Caco-2 (cell line): ENCODE measurements at regions of chr12 and their contacts with region 1.

Region 1: DNA sequence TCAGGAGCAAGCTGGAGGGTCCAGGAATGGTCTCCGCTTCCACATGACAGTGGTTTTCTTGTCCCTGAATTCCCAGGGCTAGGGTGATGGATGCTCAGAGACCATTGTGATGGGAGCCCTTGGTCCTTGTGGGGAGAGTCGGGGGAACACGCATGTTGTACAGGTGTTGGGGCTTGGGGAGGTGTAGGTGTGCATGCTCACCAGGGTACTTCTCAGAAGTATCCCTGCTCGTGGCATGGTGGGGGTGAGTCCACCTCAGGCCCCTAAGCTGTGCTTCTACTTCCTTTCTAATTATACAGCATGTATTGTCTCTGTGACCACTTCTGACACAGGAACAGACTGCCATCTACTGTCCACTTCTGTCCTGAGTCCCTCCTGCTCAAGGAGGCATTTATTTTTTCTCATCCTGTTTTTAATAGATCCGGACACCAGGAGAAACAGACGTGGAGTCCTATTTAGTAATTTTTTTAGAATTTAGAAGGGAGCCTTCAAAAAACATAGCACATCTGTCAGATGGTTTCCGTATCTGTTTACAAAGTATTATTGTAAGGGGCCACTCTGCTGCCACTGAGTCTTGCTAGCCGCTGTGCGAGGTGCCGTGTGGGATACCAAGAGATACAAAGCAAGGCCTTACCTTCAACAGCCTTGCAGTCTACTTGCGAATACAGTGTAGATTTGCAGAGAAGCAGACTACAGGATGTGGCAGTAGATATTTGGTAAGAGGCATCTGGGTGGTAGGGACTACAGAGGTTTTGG is 10.5 kb downstream of the NTF3 start:
- DNase-seq: peak; percentile 65 to 76
- H3K4me3 ChIP-seq: no peak overlapping the region
- H3K4me3 Mint-ChIP-seq: no peak overlapping the region
- H3K27ac Mint-ChIP-seq: no peak overlapping the region
- H3K4me1 ChIP-seq: no peaks in the 10 kb centered on the region
- H3K4me1 Mint-ChIP-seq: peaks cover 7% of the 10 kb centered on the region
- H3K27me3 ChIP-seq: no peaks in the 10 kb centered on the region
- H3K27me3 Mint-ChIP-seq: no peaks in the 10 kb centered on the region
- CTCF ChIP-seq: peak; percentile 82 to 90

Region 2: DNA sequence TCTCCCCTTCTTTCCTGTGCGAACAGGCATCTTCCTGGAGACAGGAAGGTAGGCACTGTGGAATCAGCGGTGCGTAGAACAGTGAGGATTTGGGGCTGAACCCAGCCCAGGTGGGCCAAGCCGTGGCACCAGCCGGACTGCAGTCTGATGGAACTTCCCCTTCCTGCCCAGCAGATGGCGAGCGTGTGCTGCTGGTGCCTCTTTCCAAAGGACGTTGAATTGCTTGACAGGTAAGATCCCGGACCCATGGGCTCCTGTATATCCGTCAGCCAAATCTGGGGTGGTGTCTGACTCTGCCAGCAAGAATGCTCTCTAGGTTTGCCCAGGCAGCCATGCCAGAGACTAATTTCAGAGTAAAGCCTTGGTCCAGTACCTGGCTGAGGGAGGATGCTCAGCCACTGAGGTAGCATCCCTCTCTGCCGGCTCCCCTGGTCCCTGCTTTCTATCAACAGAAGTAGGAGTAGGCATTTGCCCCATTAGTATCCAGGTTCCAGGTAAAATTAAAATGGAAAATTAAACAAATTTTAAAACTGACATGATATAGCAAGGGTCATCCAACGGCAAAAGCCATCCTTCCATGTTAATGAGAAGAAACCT is 419.9 kb before region 1 on chr12:
- CTCF ChIA-PET with region 1: no interaction called
- POLR2A ChIA-PET with region 1: no interaction called
- intact Hi-C with region 1: loop called (anchors 1 kb)
- DNase-seq: peak in 1 of 2 experiments; percentile 65
- H3K4me3 ChIP-seq: no peak overlapping the region
- H3K4me3 Mint-ChIP-seq: no peak overlapping the region
- H3K27ac Mint-ChIP-seq: no peak overlapping the region
- H3K4me1 ChIP-seq: no peaks in the 10 kb centered on the region
- H3K4me1 Mint-ChIP-seq: no peaks in the 10 kb centered on the region
- H3K27me3 ChIP-seq: peaks cover 3% of the 10 kb centered on the region; the same call in 1 of the 2 replicates
- H3K27me3 Mint-ChIP-seq: peaks cover 28% of the 10 kb centered on the region
- CTCF ChIP-seq: peak; percentile 98 to 99

Region 3: GRCh38 chr12:5083955-5084849 is 358.2 kb before region 1 on chr12:
- CTCF ChIA-PET with region 1: no interaction called
- POLR2A ChIA-PET with region 1: no interaction called
- intact Hi-C with region 1: loop called (anchors 5 kb)
- DNase-seq: peak in 1 of 2 experiments; percentile 73
- H3K4me3 ChIP-seq: no peak overlapping the region
- H3K4me3 Mint-ChIP-seq: no peak overlapping the region
- H3K27ac Mint-ChIP-seq: no peak overlapping the region
- H3K4me1 ChIP-seq: no peaks in the 10 kb centered on the region
- H3K4me1 Mint-ChIP-seq: no peaks in the 10 kb centered on the region
- H3K27me3 ChIP-seq: peaks cover 3% of the 10 kb centered on the region; the same call in 1 of the 2 replicates
- H3K27me3 Mint-ChIP-seq: peaks cover 31% of the 10 kb centered on the region
- CTCF ChIP-seq: peak; percentile 78 to 82

Region 4: DNA sequence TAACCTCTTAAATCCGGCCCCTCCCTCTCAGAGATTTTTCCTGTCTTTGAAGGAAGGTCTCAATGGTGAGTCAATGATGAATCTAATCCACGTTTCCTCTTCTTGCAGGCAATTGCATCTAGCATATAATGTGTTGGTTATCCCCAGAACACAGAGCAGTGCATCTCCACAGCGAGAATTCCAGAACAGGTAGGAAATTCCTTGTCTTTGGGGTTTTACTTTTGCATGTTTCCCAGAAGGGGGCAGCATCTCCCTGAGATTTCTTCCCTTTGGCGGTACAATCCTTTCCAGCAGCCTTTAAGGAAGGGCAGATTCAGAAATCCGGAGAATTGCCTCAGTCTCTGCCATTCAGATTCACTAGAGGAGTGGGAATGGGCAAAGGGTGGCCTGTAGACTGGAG is 270.7 kb before region 1 on chr12:
- CTCF ChIA-PET with region 1: interaction called, 11 read pairs
- POLR2A ChIA-PET with region 1: no interaction called
- intact Hi-C with region 1: loop called (anchors 1 kb)
- DNase-seq: peak; percentile 62 to 81
- H3K4me3 ChIP-seq: no peak overlapping the region
- H3K4me3 Mint-ChIP-seq: no peak overlapping the region
- H3K27ac Mint-ChIP-seq: no peak overlapping the region
- H3K4me1 ChIP-seq: no peaks in the 10 kb centered on the region
- H3K4me1 Mint-ChIP-seq: no peaks in the 10 kb centered on the region
- H3K27me3 ChIP-seq: no peaks in the 10 kb centered on the region; the same call in 1 of the 2 replicates
- H3K27me3 Mint-ChIP-seq: peaks cover 8% of the 10 kb centered on the region
- CTCF ChIP-seq: peak; percentile 81 to 87

Region 5: DNA sequence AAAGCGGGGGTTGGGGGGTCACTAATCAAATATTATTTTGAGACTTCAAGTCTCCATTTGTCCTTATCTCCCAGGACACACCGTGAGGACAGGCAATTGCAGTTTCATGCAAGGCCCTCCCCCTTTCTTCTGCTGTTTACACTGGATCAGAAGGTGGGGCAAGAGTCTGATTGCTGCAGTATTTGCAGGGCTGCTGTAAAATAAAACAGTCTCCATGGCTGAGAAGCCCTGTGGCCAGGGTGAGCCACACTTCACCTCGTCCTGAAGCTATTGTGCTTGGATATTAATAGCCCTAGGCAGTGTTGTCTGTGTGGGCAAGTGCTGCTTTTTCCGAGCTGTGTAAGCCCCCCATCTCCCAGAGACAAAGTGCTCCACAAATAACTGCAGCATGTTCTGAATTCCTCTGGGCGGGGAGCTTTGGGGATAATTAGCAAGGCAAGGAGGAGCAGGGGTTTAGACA is 197.9 kb before region 1 on chr12:
- CTCF ChIA-PET with region 1: no interaction called
- POLR2A ChIA-PET with region 1: no interaction called
- intact Hi-C with region 1: loop called (anchors 5 kb)
- DNase-seq: peak; percentile 87 to 89
- H3K4me3 ChIP-seq: no peak overlapping the region
- H3K4me3 Mint-ChIP-seq: peak overlapping the region; percentile 48
- H3K27ac Mint-ChIP-seq: peak overlapping the region; percentile 81
- H3K4me1 ChIP-seq: peaks cover 49% of the 10 kb centered on the region
- H3K4me1 Mint-ChIP-seq: peaks cover 38% of the 10 kb centered on the region
- H3K27me3 ChIP-seq: no peaks in the 10 kb centered on the region
- H3K27me3 Mint-ChIP-seq: no peaks in the 10 kb centered on the region
- CTCF ChIP-seq: no peak